Activated naive CD4-positive, alpha-beta T cell treated with anti-CD3 and anti-CD28 coated beads for 36 hours (primary cell): ENCODE measurements at regions of chr20 and their contacts with region 1.

Region 1: GRCh38 chr20:41136680-41137613 is at the start of gene PLCG1:
- DNase-seq: peak; percentile 86
- H3K4me3 Mint-ChIP-seq: peak within 1 kb of the TSS; percentile 85
- H3K27ac Mint-ChIP-seq: peak within 1 kb of the TSS; percentile 94
- H3K4me1 Mint-ChIP-seq: peaks cover 63% of the 10 kb centered on the region
- H3K27me3 Mint-ChIP-seq: no peaks in the 10 kb centered on the region
- total RNA-seq, gene PLCG1: 117 to 136 TPM

Region 2: DNA sequence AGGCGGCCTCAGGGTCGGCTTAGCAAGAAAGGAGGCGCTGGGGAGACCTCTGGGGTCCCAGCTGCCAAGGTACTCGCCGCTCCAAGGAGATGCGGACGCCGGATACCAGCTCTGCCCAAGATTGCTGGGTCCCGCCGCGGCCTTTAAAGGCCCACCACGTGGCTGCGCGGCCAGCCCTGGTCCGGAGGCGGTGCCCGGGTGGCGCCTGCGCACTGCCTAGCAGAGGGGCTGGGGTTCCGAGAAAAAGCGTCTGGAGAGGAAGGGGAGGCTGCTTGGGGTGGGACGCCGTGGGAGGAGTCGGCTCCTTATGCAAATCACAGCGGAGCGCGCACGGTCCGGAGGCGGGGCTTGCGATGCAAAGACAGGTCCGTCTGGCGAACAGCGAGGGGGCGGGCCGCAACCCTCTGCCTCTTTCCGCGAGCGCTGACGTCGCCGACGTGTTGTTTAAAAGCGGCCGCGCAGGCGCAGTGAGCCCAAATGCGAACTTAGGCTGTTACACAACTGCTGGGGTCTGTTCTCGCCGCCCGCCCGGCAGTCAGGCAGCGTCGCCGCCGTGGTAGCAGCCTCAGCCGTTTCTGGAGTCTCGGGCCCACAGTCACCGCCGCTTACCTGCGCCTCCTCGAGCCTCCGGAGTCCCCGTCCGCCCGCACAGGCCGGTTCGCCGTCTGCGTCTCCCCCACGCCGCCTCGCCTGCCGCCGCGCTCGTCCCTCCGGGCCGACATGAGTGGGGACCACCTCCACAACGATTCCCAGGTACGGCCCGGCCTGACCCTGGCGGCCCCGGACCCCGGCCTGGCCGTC is 108.4 kb before region 1 on chr20 and contains the start of gene TOP1:
- CTCF ChIA-PET with region 1: no interaction called
- intact Hi-C with region 1: loop called (anchors 1 kb)
- DNase-seq: peak; percentile 100
- H3K4me3 Mint-ChIP-seq: peak within 1 kb of the TSS; percentile 86
- H3K27ac Mint-ChIP-seq: peak within 1 kb of the TSS; percentile 90
- H3K4me1 Mint-ChIP-seq: peaks cover 42% of the 10 kb centered on the region
- H3K27me3 Mint-ChIP-seq: no peaks in the 10 kb centered on the region
- total RNA-seq, gene TOP1: 91.7 to 92.6 TPM

Region 3: DNA sequence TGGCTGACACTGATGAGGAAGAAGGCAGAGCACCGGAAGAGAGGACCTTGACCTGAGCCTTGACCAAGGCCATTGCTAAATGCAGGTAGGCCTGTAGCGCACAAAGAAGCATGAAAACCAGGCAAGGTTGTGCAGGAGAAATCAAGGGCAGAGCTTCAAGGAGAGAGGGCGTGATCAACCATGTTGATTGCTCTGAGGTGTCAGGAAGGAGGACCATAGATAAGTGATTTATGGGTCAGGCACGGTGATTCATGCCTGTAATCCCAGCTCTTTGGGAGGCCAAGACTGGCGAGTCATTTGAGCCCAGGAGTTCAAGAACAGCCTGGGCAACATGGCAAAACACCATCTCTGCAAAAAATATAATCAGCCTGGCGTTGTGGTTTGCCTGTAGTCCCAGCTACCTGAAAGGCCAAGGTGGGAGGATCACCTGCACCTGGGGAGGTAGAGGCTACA is 12.8 kb after region 1 on chr20:
- CTCF ChIA-PET with region 1: interaction called, 77 read pairs
- intact Hi-C with region 1: no loop called
- DNase-seq: peak; percentile 45
- H3K4me3 Mint-ChIP-seq: no peak overlapping the region
- H3K27ac Mint-ChIP-seq: peak overlapping the region; percentile 63
- H3K4me1 Mint-ChIP-seq: peaks cover 92% of the 10 kb centered on the region
- H3K27me3 Mint-ChIP-seq: no peaks in the 10 kb centered on the region

Region 4: DNA sequence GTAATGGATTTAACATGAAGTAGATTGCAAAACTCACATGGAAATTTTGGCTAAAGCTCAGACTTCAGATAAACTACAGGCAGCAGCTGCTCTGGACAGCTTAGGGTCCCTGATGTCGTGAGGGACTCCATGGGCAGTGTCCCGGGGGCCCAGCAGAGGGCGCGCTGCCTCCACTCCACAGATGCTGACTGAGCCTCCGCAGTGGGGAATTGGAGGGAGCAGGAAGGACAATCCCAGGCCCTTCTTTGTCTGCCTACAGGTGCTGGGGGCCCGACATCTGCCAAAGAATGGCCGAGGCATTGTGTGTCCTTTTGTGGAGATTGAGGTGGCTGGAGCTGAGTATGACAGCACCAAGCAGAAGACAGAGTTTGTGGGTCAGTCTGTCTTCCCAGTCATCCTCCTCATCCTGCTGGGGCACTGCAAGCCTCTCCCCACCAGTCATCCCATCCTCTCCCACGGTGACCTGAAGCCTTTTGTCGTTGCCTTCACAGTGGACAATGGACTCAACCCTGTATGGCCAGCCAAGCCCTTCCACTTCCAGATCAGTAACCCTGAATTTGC is 36.3 kb after region 1 on chr20:
- CTCF ChIA-PET with region 1: interaction called, 15 read pairs
- intact Hi-C with region 1: loop called (anchors 5 kb)
- DNase-seq: peak; percentile 75
- H3K4me3 Mint-ChIP-seq: no peak overlapping the region
- H3K27ac Mint-ChIP-seq: peak overlapping the region; percentile 36
- H3K4me1 Mint-ChIP-seq: peaks cover 4% of the 10 kb centered on the region
- H3K27me3 Mint-ChIP-seq: no peaks in the 10 kb centered on the region

Region 5: GRCh38 chr20:41317536-41318270 is 180.8 kb after region 1 on chr20 and contains the start of gene ZHX3:
- CTCF ChIA-PET with region 1: interaction called, 4 read pairs
- intact Hi-C with region 1: loop called (anchors 1 kb)
- DNase-seq: peak; percentile 94
- H3K4me3 Mint-ChIP-seq: peak within 1 kb of the TSS; percentile 85
- H3K27ac Mint-ChIP-seq: peak within 1 kb of the TSS; percentile 65
- H3K4me1 Mint-ChIP-seq: peaks cover 29% of the 10 kb centered on the region
- H3K27me3 Mint-ChIP-seq: no peaks in the 10 kb centered on the region
- total RNA-seq, gene ZHX3: 9.4 to 9.9 TPM

Region 6: DNA sequence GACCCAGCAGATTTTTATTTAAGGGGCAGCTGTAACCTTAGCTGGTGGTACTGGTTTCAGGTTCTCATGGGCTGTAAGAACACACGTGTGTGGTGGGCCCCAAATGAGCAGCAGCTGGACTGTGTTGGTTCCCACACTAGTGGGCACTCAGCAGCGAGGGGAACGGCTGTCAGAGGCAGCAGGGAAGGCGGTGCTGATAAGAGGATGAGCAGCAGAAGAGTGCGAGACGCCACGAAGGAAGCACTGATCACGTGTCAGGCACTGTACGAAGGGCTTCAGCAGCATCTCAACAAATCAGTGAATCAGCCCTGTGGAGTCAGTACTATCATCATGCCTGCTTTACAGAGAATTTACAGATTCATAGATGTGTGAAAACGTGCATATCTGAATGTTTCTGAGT is 270.7 kb after region 1 on chr20:
- CTCF ChIA-PET with region 1: no interaction called
- intact Hi-C with region 1: no loop called
- DNase-seq: peak; percentile 10
- H3K4me3 Mint-ChIP-seq: no peak overlapping the region
- H3K27ac Mint-ChIP-seq: no peak overlapping the region
- H3K4me1 Mint-ChIP-seq: peaks cover 12% of the 10 kb centered on the region
- H3K27me3 Mint-ChIP-seq: no peaks in the 10 kb centered on the region

Region 7: GRCh38 chr20:41428285-41428684 is 291.3 kb after region 1 on chr20:
- CTCF ChIA-PET with region 1: no interaction called
- intact Hi-C with region 1: loop called (anchors 5 kb)
- DNase-seq: peak; percentile 76
- H3K4me3 Mint-ChIP-seq: no peak overlapping the region
- H3K27ac Mint-ChIP-seq: peak overlapping the region; percentile 93
- H3K4me1 Mint-ChIP-seq: peaks cover 43% of the 10 kb centered on the region
- H3K27me3 Mint-ChIP-seq: no peaks in the 10 kb centered on the region